MCF 10A (cell line): ENCODE measurements at regions of chr3 and their contacts with region 1.

Region 1: GRCh38 chr3:152399374-152399773 is 130.6 kb downstream of the MBNL1 start:
- DNase-seq: peak; percentile 86
- H3K4me3 Mint-ChIP-seq: no peak overlapping the region
- H3K27ac Mint-ChIP-seq: no peak overlapping the region
- H3K4me1 Mint-ChIP-seq: peaks cover 48% of the 10 kb centered on the region
- H3K27me3 Mint-ChIP-seq: no peaks in the 10 kb centered on the region
- CTCF ChIP-seq: no peak

Region 2: DNA sequence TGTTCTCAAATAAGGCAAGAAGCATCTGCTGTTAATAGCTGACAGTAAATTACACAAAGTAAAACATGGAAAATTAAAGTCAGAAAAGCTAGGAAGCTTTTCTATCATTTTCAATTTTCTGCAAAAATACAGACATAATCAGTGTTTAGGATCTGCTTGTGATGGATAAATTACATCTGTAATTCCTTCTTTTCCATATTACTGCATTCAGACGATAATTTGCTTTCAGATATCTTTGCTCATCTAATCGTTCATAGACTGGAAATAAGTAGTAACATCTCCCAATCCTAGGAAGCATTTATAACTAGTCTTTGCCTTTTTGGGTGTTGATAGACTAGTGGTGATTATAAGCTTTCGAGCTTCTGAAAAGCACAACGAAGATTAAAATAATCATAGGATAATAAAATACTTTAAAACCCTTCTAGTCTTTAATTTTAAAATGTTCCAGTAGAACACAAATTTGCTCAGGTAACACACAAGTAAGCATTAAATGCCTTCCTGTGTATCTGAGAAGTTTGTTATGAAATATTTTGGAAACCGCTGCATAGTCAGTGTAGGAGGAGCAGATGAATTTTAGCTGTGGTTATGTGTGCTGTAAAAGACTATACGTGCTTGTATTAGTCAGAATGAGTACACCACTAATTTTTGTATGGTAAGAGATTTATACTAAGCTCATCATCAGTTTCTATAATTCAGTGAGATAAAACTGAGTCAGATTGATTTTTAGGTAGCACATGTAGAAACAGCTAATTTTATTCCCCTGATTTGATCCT is 89.7 kb before region 1 on chr3:
- CTCF ChIA-PET with region 1: no interaction called
- POLR2A ChIA-PET with region 1: interaction called, 3 read pairs
- intact Hi-C with region 1: loop called (anchors 1 kb)
- DNase-seq: peak; percentile 54
- H3K4me3 Mint-ChIP-seq: no peak overlapping the region
- H3K27ac Mint-ChIP-seq: no peak overlapping the region
- H3K4me1 Mint-ChIP-seq: peaks cover 21% of the 10 kb centered on the region
- H3K27me3 Mint-ChIP-seq: no peaks in the 10 kb centered on the region
- CTCF ChIP-seq: no peak

Region 3: GRCh38 chr3:152382312-152383135 is 16.9 kb before region 1 on chr3:
- CTCF ChIA-PET with region 1: no interaction called
- POLR2A ChIA-PET with region 1: interaction called, 14 read pairs
- intact Hi-C with region 1: no loop called
- DNase-seq: peak; percentile 31
- H3K4me3 Mint-ChIP-seq: peak overlapping the region; percentile 73
- H3K27ac Mint-ChIP-seq: peak overlapping the region; percentile 76
- H3K4me1 Mint-ChIP-seq: peaks cover 34% of the 10 kb centered on the region
- H3K27me3 Mint-ChIP-seq: no peaks in the 10 kb centered on the region
- CTCF ChIP-seq: no peak